Mammary epithelial cell (primary cell): ENCODE measurements at regions of chr1 and their contacts with region 1.

Region 1: DNA sequence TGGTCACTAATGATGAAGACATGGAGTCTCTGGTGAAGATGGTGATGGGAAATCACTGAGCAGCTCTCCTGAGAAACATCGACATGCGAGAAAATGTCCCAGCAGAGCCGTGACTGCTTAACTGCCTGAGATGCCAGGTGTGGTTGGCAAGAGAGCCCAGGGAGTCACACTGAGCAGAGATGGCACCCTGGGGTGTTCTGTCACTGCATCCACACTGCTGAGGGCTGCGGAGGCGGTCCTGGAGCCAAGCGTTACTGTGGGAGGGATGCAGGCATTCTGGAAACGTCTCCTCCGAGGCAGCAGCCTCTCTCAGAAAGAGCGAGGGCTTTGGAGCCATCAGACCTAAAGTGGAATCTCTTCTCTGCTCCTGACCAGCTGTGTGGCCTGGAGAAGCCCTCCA is 57.2 kb downstream of the EPHB2 start:
- DNase-seq: no peak
- H3K4me3 ChIP-seq: no peak overlapping the region
- H3K27ac ChIP-seq: no peak overlapping the region
- H3K4me1 ChIP-seq: no peaks in the 10 kb centered on the region
- H3K27me3 ChIP-seq: no peaks in the 10 kb centered on the region
- CTCF ChIP-seq: no peak

Region 2: GRCh38 chr1:22540337-22540736 is 227.5 kb before region 1 on chr1:
- CTCF ChIA-PET with region 1: no interaction called
- dilution Hi-C with region 1: no loop called
- in situ Hi-C with region 1: no loop called
- intact Hi-C with region 1: loop called (anchors 5 kb)
- DNase-seq: no peak
- H3K4me3 ChIP-seq: no peak overlapping the region
- H3K27ac ChIP-seq: no peak overlapping the region
- H3K4me1 ChIP-seq: no peaks in the 10 kb centered on the region
- H3K27me3 ChIP-seq: peaks cover 2% of the 10 kb centered on the region
- CTCF ChIP-seq: no peak